AG04449 (cell line): ENCODE measurements at regions of chr1 and their contacts with region 1.

Region 1: GRCh38 chr1:201468844-201469511 is at the start of gene PHLDA3:
- DNase-seq: no peak
- H3K4me3 ChIP-seq: peak within 1 kb of the TSS; percentile 97
- CTCF ChIP-seq: no peak

Region 2: DNA sequence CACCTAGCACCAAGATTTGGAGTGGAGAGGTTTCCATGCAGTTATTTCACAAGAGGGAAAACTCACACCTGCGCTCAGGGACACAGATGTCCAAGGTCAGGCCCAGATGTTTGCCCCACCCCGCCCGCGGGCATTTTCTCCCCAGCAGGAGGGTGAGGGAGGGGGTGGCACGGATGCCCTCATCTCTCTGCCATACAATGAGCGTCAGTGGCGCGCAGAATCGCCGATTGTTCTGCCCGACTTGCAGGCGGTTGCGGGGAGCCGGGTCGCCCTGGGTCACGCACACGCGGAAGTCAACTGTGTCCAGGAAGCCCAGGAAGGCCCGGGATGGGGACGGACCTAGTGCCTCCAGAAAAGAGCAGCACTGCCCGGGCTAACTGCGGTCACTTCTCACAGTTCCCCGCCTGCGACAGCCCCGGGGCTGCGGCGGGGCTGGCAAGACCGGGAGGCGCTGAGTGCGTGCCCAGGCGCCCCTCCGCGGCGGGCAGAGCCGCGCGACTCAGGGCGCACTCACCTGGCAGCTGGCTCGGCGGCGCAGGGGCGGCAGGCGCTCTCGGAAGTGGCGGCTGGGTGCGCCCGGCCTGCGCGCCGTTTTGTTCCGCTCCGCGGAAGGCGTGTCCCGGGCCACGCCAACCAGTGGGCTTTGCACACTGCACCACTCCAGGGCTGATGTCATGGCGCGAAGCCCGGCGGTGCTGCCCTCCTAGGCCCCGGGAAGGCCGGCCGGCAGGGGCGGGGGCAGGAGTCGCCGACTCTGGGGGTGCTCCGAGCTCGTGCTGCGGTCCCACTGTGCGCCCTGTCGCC is 37.8 kb after region 1 on chr1 and contains the start of gene CSRP1:
- CTCF ChIA-PET with region 1: interaction called, 119 read pairs
- POLR2A ChIA-PET with region 1: interaction called, 25 read pairs
- DNase-seq: no peak
- H3K4me3 ChIP-seq: peak within 1 kb of the TSS; percentile 83
- CTCF ChIP-seq: no peak

Region 3: DNA sequence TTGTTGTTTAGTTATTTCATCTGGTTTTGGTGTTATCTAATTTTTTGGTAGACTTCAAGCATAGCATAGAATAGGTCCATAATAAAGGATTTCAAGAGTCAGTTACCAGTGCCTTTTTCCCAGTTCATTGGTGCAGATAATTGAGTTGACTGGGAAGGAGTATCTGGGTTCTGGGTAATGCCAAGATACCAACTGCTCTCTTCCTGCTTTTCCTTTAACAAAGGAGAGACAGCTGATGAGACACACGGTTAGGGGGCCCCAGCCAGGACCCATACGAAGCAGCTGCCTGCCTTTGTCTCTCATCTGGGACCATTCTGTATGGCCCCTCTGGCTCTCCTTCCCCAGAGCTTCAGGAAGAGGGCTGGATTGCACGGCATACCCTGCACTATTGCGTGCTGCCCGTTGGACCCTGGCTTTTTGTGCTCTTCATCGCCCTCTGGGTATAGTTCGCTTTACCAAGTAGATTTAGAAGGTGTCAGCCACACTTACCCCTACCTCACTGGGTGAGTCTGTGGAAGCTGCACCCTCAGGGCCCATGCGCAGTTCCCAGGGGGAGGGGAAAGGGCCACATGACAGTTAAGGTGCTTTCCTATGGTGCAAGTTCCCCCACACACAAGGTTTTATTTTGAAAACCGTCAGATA is 77.0 kb after region 1 on chr1:
- CTCF ChIA-PET with region 1: no interaction called
- POLR2A ChIA-PET with region 1: no interaction called
- DNase-seq: no peak
- H3K4me3 ChIP-seq: no peak overlapping the region
- CTCF ChIP-seq: no peak